Mucosa of descending colon (tissue), 3 donors: ENCODE measurements at regions of chr9 and their contacts with region 1.

Region 1: GRCh38 chr9:131762356-131762932 is 22.6 kb upstream of the RAPGEF1 start:
- DNase-seq: peak; percentile 69 to 82 (median 77)
- ATAC-seq: peak; percentile 98
- H3K4me3 ChIP-seq: no peak overlapping the region
- H3K4me1 ChIP-seq: peaks cover 2% of the 10 kb centered on the region
- CTCF ChIP-seq: peak; percentile 95

Region 2: DNA sequence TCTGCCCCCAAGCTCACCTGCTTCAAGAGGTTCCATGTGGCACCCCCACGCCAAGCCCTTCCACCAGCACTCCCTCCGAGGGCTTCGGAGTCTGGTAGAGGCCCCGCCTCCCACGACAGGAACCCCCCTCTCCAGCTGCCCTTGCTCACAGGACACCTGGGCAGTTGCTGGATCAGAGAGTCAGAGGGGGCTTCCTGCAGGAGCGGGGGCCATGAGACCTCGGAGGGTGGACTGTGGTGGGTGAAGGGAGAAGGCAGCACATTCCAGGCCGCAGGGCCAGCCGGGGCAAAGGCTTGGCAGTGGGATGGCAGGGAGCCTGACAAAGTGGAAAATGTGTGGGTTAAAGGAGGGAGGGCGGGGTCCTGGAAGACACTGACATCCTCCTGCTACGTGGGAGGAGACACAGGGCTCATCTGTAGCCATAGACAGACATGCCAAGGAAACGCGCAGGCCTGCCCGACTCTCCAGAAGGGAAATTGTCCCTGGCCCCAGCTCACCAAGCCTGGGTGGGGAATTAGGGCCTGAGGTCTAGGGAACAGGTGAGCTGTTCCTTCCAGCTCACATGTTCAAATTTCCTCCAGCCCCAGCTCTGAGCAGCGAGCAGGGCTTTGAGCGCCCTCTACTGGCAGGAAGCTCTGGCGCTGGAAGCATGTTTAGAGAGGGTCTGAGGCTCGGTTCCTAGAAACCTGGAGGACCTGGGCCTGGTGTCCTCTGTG is 473.7 kb after region 1 on chr9:
- intact Hi-C with region 1: loop called in 1 of 2 experiments (anchors 10 kb)
- DNase-seq: peak in 2 of 3 donors; percentile 81 to 88
- ATAC-seq: peak; percentile 13
- H3K4me3 ChIP-seq: no peak overlapping the region
- H3K4me1 ChIP-seq: no peaks in the 10 kb centered on the region
- CTCF ChIP-seq: peak; percentile 97

Region 3: GRCh38 chr9:132250324-132251262 is 488.1 kb after region 1 on chr9:
- intact Hi-C with region 1: loop called in 1 of 2 experiments (anchors 10 kb)
- DNase-seq: no peak
- ATAC-seq: no peak
- H3K4me3 ChIP-seq: no peak overlapping the region
- H3K4me1 ChIP-seq: no peaks in the 10 kb centered on the region
- CTCF ChIP-seq: no peak